GM12878 (cell line): ENCODE measurements at regions of chr12 and their contacts with region 1.

Region 1: GRCh38 chr12:78470354-78471195 is 394.0 kb upstream of the SYT1 start:
- DNase-seq: no peak
- ATAC-seq: peak; percentile 73
- H3K4me3 ChIP-seq: no peak overlapping the region
- H3K27ac ChIP-seq: no peak overlapping the region
- H3K4me1 ChIP-seq: no peaks in the 10 kb centered on the region
- H3K27me3 ChIP-seq: no peaks in the 10 kb centered on the region
- CTCF ChIP-seq: peak; percentile 38 to 52 (median 41); a peak in 4 of 6 replicates
- EP300 ChIP-seq: no peak
- POLR2A ChIP-seq: no peak
- RAD21 ChIP-seq: peak; percentile 36; the same call in 1 of the 2 replicates

Region 2: DNA sequence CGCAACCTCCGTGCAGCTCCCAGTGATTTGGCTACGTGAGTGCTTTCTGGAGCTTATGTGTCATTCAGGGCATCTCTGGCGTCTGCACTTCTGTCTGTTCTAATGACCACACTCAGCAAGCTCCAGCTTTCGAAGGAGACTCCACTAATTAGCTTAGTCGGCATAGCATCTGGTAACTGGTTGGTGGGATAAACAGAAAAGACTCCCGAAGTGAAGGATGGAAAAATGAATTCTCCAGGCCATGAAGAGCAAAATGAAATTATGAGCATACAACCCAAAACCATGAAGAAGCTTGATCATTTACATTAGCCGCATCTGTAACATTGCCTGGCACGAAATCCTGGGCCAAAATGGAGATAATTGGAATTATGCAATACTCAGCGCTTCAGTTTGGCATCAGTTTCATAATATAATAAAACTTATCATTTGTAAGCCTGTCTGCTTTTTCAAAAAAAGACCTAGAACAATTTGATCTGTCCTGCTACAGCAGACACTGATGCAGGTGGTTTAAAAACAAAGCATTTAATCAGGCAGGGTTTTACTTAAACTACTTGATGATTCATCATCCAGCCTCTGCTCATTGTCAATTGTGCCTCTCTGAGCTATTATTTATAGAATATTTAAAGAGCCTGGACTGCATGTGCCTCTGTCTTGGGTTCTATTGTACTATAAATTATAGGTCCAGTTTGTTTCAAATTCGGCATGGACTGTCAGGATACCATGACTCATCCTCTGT is 481.4 kb after region 1 on chr12:
- CTCF ChIA-PET with region 1: no interaction called
- POLR2A ChIA-PET with region 1: no interaction called
- RAD21 ChIA-PET with region 1: no interaction called
- SMC1A ChIA-PET with region 1: no interaction called
- in situ Hi-C with region 1: no loop called
- intact Hi-C with region 1: no loop called
- DNase-seq: no peak
- ATAC-seq: no peak
- H3K4me3 ChIP-seq: no peak overlapping the region
- H3K27ac ChIP-seq: no peak overlapping the region
- H3K4me1 ChIP-seq: no peaks in the 10 kb centered on the region
- H3K27me3 ChIP-seq: no peaks in the 10 kb centered on the region
- CTCF ChIP-seq: no peak
- EP300 ChIP-seq: no peak
- POLR2A ChIP-seq: no peak
- RAD21 ChIP-seq: no peak

Region 3: DNA sequence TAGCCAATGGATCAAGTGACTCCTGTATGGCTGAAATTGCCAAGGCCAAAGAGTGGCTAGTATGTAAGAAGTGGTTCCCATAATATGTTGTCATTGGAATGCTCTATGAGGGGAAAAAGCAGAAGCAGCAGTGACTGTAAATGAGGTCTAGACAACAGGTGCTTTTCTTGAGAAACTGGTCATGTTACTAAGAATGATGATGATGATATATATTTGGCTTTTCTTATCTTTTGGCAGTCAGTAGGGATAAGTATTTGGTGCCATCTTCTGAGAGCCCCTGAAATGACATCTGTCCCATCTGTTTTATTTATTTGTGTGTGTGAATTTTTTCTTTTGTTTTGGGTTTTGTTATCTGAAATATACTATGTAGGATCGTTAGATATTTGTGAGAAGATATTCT is 535.7 kb after region 1 on chr12:
- CTCF ChIA-PET with region 1: no interaction called
- POLR2A ChIA-PET with region 1: no interaction called
- RAD21 ChIA-PET with region 1: no interaction called
- SMC1A ChIA-PET with region 1: interaction called, 4 read pairs
- in situ Hi-C with region 1: no loop called
- intact Hi-C with region 1: loop called (anchors 10 kb)
- DNase-seq: no peak
- ATAC-seq: peak; percentile 56
- H3K4me3 ChIP-seq: no peak overlapping the region
- H3K27ac ChIP-seq: no peak overlapping the region
- H3K4me1 ChIP-seq: no peaks in the 10 kb centered on the region
- H3K27me3 ChIP-seq: no peaks in the 10 kb centered on the region; a peak in 1 of 4 replicates
- CTCF ChIP-seq: no peak; a peak in 1 of 6 replicates
- EP300 ChIP-seq: no peak
- POLR2A ChIP-seq: no peak
- RAD21 ChIP-seq: 0 out of 2 replicates have a peak, but pooled peaks have one; percentile 39

Region 4: GRCh38 chr12:79174626-79175025 is 704.1 kb after region 1 on chr12:
- CTCF ChIA-PET with region 1: interaction called, 26 read pairs
- POLR2A ChIA-PET with region 1: no interaction called
- RAD21 ChIA-PET with region 1: interaction called, 14 read pairs
- SMC1A ChIA-PET with region 1: interaction called, 12 read pairs
- in situ Hi-C with region 1: no loop called
- intact Hi-C with region 1: loop called (anchors 1 kb)
- DNase-seq: no peak
- ATAC-seq: peak; percentile 86
- H3K4me3 ChIP-seq: no peak overlapping the region
- H3K27ac ChIP-seq: no peak overlapping the region
- H3K4me1 ChIP-seq: no peaks in the 10 kb centered on the region
- H3K27me3 ChIP-seq: no peaks in the 10 kb centered on the region
- CTCF ChIP-seq: peak in 2 of 3 experiments; percentile 14 to 51; a peak in 1 of 6 replicates
- EP300 ChIP-seq: no peak
- POLR2A ChIP-seq: no peak
- RAD21 ChIP-seq: peak; percentile 56

Region 5: GRCh38 chr12:79344855-79345847 is 874.6 kb after region 1 on chr12:
- CTCF ChIA-PET with region 1: interaction called, 10 read pairs
- POLR2A ChIA-PET with region 1: no interaction called
- RAD21 ChIA-PET with region 1: no interaction called
- SMC1A ChIA-PET with region 1: interaction called, 3 read pairs
- in situ Hi-C with region 1: no loop called
- intact Hi-C with region 1: loop called (anchors 1 kb)
- DNase-seq: peak; percentile 2
- ATAC-seq: peak; percentile 96
- H3K4me3 ChIP-seq: no peak overlapping the region
- H3K27ac ChIP-seq: no peak overlapping the region
- H3K4me1 ChIP-seq: no peaks in the 10 kb centered on the region
- H3K27me3 ChIP-seq: no peaks in the 10 kb centered on the region
- CTCF ChIP-seq: peak; percentile 51 to 72 (median 64)
- EP300 ChIP-seq: no peak
- POLR2A ChIP-seq: no peak
- RAD21 ChIP-seq: peak; percentile 64

Region 6: GRCh38 chr12:79373896-79374499 is 903.4 kb after region 1 on chr12:
- CTCF ChIA-PET with region 1: interaction called, 5 read pairs
- POLR2A ChIA-PET with region 1: no interaction called
- RAD21 ChIA-PET with region 1: no interaction called
- SMC1A ChIA-PET with region 1: no interaction called
- in situ Hi-C with region 1: no loop called
- intact Hi-C with region 1: loop called (anchors 2 kb)
- DNase-seq: no peak
- ATAC-seq: peak; percentile 94
- H3K4me3 ChIP-seq: no peak overlapping the region
- H3K27ac ChIP-seq: no peak overlapping the region
- H3K4me1 ChIP-seq: no peaks in the 10 kb centered on the region
- H3K27me3 ChIP-seq: no peaks in the 10 kb centered on the region
- CTCF ChIP-seq: peak; percentile 48 to 59 (median 58)
- EP300 ChIP-seq: no peak
- POLR2A ChIP-seq: no peak
- RAD21 ChIP-seq: peak; percentile 59

Region 7: GRCh38 chr12:79717006-79717405 is 1246.4 kb after region 1 on chr12:
- CTCF ChIA-PET with region 1: no interaction called
- POLR2A ChIA-PET with region 1: no interaction called
- RAD21 ChIA-PET with region 1: no interaction called
- SMC1A ChIA-PET with region 1: no interaction called
- in situ Hi-C with region 1: no loop called
- intact Hi-C with region 1: no loop called
- DNase-seq: no peak
- ATAC-seq: no peak
- H3K4me3 ChIP-seq: no peak overlapping the region
- H3K27ac ChIP-seq: no peak overlapping the region
- H3K4me1 ChIP-seq: no peaks in the 10 kb centered on the region
- H3K27me3 ChIP-seq: no peaks in the 10 kb centered on the region
- CTCF ChIP-seq: no peak
- EP300 ChIP-seq: no peak
- POLR2A ChIP-seq: no peak
- RAD21 ChIP-seq: no peak